ENCODE measurements at regions of chr1 and their contacts with region 1.

Region 1: GRCh38 chr1:52683367-52683940 is 14.7 kb downstream of the COA7 start:
- DNase-seq: no peak
- H3K4me3 ChIP-seq: no peak overlapping the region
- H3K4me3 Mint-ChIP-seq: no peak overlapping the region
- H3K27ac ChIP-seq: no peak overlapping the region
- H3K27ac Mint-ChIP-seq: peak overlapping the region in 3 of 7 donors; percentile 1 to 75 (median 30)
- H3K4me1 ChIP-seq: peaks cover 8% of the 10 kb centered on the region
- H3K4me1 Mint-ChIP-seq: peaks cover 5 to 23% (median 8%) of the 10 kb centered on the region in 4 donors
- H3K27me3 ChIP-seq: no peaks in the 10 kb centered on the region
- H3K27me3 Mint-ChIP-seq: no peaks in the 10 kb centered on the region

Region 2: DNA sequence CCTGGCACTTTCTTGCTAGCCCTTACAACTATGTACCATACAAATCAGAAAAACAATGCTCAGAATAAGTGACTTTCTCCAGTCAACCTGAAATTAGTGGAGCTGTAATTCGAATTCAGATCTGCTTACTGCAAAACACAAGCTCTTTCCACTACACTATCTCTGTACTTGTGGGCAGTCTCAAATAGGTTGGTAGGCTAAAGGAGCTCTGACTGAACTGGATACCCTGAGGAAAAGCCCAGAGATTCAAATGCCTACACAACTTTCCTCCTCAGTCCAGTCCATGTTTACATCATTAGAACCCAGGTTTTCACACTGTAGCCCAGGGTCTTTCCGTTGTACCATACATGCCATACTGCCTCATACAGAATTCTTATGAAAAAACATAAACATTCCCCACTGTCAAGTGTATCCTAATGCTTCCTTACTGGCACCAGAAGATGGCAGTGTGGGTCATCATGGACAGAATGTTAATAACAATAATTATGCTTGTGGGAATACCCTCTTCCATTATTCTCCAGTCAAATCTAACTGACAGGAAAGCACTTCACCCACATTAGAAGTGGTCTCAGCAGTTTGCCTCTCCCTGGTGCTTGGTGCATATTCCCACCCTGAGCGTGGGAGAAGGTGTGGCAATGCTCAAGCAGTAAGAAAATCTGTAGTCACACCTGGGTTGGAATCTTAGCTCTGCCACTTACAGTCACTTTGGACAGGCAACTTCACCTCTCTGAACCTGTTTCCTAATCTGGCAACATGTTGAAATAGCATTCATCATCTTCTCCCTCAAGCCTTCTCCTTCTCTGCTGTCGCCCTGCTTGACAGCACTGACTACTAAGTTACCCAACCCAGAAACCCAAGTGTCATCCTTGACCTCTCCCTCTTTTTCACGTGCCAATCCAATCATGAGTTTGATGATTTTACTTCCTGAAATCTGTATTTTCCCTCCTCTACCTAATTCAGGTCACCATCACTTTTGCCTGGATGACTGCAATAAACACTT is 556.0 kb before region 1 on chr1:
- CTCF ChIA-PET with region 1: interaction called, 4 read pairs
- POLR2A ChIA-PET with region 1: no interaction called
- intact Hi-C with region 1: loop called (anchors 1 kb)
- DNase-seq: peak in 4 of 5 donors; percentile 18 to 31 (median 26)
- H3K4me3 ChIP-seq: no peak overlapping the region
- H3K4me3 Mint-ChIP-seq: no peak overlapping the region
- H3K27ac ChIP-seq: no peak overlapping the region
- H3K27ac Mint-ChIP-seq: no peak overlapping the region
- H3K4me1 ChIP-seq: no peaks in the 10 kb centered on the region
- H3K4me1 Mint-ChIP-seq: no peaks in the 10 kb centered on the region
- H3K27me3 ChIP-seq: no peaks in the 10 kb centered on the region
- H3K27me3 Mint-ChIP-seq: peaks cover 10 to 17% of the 10 kb centered on the region in 2 donors

Region 3: GRCh38 chr1:52365746-52366516 is 317.5 kb before region 1 on chr1 and contains the start of gene CC2D1B:
- CTCF ChIA-PET with region 1: interaction called, 4 read pairs
- POLR2A ChIA-PET with region 1: interaction called, 3 read pairs
- intact Hi-C with region 1: loop called (anchors 1 kb)
- DNase-seq: peak; percentile 98 to 100 (median 100)
- H3K4me3 ChIP-seq: peak within 1 kb of the TSS; percentile 53 to 88
- H3K4me3 Mint-ChIP-seq: peak within 1 kb of the TSS; percentile 90 to 97 (median 92)
- H3K27ac ChIP-seq: peak within 1 kb of the TSS; percentile 78
- H3K27ac Mint-ChIP-seq: peak within 1 kb of the TSS; percentile 90 to 97 (median 95)
- H3K4me1 ChIP-seq: peaks cover 32% of the 10 kb centered on the region
- H3K4me1 Mint-ChIP-seq: peaks cover 20 to 56% (median 41%) of the 10 kb centered on the region in 4 donors
- H3K27me3 ChIP-seq: no peaks in the 10 kb centered on the region
- H3K27me3 Mint-ChIP-seq: no peaks in the 10 kb centered on the region
- total RNA-seq, gene CC2D1B: 83.7 to 84.1 TPM

Region 4: DNA sequence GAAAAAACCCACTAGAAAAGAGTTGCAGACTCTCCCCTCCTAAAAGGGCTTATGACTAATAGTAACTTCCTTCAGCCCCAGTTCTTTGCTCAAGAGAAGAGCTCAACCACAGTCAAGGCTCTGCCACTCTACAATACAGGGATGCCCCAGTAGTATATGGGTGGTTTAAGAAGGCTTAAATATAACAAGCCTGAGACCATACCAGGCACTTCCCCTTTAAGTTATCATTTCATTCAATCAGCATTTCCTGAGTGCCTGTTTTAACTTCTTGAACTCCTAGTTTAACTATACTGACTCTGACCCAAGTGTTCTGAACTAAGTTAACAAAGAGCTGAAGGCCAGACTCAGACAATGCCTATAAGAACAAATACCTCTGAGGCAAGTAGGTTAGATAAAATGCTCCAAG is 259.2 kb before region 1 on chr1:
- CTCF ChIA-PET with region 1: interaction called, 6 read pairs
- POLR2A ChIA-PET with region 1: interaction called, 4 read pairs
- intact Hi-C with region 1: loop called (anchors 5 kb)
- DNase-seq: peak; percentile 65 to 86 (median 71)
- H3K4me3 ChIP-seq: peak overlapping the region in 1 of 2 donors; percentile 4
- H3K4me3 Mint-ChIP-seq: peak overlapping the region; percentile 66 to 83 (median 74)
- H3K27ac ChIP-seq: peak overlapping the region; percentile 53
- H3K27ac Mint-ChIP-seq: peak overlapping the region; percentile 91 to 99 (median 94)
- H3K4me1 ChIP-seq: peaks cover 57% of the 10 kb centered on the region
- H3K4me1 Mint-ChIP-seq: peaks cover 38 to 49% (median 46%) of the 10 kb centered on the region in 4 donors
- H3K27me3 ChIP-seq: no peaks in the 10 kb centered on the region
- H3K27me3 Mint-ChIP-seq: no peaks in the 10 kb centered on the region

Region 5: DNA sequence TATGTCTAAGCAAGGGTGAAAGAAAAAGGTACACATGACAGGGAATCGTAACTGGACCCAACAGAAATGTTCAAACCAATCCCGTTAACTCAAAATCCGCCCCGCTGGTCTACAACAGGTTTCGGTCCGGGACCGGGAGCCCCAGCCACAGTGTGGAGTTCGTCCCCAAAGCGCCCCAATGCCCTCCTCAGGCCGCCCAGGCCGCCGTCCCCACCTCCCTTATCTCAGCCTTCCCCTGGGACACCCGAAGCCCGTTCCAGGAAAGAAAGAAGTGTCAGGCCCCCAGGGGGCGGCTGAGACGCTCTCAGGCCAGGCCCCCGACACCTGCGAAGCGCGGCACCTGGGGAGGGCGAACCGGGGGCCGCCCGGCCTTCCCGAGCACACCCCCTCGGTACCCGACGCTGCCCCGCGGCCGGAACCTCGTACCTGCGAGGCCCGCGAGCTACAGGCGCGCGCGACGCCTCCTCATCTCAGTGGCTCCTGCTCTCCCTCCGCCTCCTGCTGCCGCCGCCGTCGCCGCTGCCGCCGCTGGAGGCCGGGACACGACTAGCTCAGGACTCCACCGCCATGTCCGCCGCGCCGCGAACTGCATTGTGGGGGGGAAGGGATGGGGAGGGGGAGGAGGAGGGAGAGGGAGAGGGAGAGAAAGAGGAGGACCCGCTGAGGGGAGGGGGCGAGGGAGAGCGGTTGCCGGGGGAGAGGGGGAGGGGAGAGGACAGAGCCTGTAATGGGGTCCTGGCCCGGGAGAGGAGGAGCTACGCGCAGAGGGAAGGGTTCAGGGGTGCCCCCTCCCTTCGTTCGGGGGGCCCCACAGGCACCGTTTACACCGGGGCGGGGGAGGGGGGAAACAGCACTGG is 130.7 kb before region 1 on chr1 and contains the start of gene TUT4:
- CTCF ChIA-PET with region 1: interaction called, 6 read pairs
- POLR2A ChIA-PET with region 1: interaction called, 4 read pairs
- intact Hi-C with region 1: loop called (anchors 1 kb)
- DNase-seq: peak; percentile 67 to 83 (median 73)
- H3K4me3 ChIP-seq: peak within 1 kb of the TSS; percentile 68 to 95
- H3K4me3 Mint-ChIP-seq: peak within 1 kb of the TSS in 7 of 8 donors; percentile 48 to 87 (median 77)
- H3K27ac ChIP-seq: peak within 1 kb of the TSS; percentile 92
- H3K27ac Mint-ChIP-seq: peak within 1 kb of the TSS; percentile 57 to 91 (median 83)
- H3K4me1 ChIP-seq: peaks cover 41% of the 10 kb centered on the region
- H3K4me1 Mint-ChIP-seq: peaks cover 25 to 41% (median 33%) of the 10 kb centered on the region in 4 donors
- H3K27me3 ChIP-seq: no peaks in the 10 kb centered on the region
- H3K27me3 Mint-ChIP-seq: no peaks in the 10 kb centered on the region
- total RNA-seq, gene TUT4: 151 to 159 TPM

Region 6: DNA sequence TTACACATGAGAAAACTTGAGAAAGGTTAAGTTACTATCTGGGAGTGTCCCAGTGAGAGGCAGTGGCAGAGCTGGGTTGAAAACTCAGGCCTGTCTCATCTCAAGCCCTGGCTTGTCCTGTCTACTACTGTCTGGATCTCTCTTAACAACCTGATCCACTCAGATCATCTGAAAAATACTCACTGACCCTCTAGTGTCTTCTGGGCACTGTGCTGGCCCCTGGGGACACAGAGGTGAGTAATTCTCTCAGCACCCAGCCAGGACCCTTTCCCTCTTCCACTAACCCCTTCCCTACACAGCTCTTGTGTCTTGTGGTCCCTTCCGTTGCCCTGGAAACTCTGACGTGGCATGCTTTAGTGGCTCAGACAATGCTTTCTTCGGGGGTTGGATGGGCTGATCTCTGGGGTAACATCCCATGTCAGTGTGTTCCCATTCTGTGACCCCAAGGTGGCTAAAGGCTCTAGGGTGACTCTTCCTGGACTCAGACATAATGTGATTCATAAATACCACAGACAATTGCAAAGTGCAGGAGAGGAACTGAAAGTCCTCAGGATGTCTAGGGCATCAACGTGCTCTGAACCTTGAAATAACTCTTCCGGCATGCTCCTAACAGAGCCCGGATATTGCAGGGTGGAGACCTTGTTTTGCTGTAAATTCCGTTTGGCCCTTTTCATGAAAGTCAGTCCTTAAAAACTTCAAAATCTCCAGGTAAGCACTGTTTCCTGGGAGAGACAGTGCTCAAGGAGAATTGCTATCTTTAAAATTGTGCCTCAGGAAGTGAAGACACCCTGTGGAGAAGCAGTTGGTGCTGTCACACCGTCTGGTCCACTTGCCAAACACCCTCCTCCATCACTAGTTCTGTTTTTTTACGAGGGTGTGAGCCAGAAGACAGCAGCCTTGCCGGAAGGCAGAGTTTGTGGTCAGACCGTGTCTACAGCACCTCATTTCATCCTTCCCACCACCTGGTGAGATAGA is 46.4 kb before region 1 on chr1:
- CTCF ChIA-PET with region 1: interaction called, 4 read pairs
- POLR2A ChIA-PET with region 1: interaction called, 5 read pairs
- intact Hi-C with region 1: loop called (anchors 1 kb)
- DNase-seq: peak; percentile 83 to 92 (median 85)
- H3K4me3 ChIP-seq: peak overlapping the region; percentile 0 to 20
- H3K4me3 Mint-ChIP-seq: peak overlapping the region; percentile 77 to 91 (median 87)
- H3K27ac ChIP-seq: peak overlapping the region; percentile 85
- H3K27ac Mint-ChIP-seq: peak overlapping the region; percentile 96 to 100 (median 100)
- H3K4me1 ChIP-seq: peaks cover 92% of the 10 kb centered on the region
- H3K4me1 Mint-ChIP-seq: peaks cover 61 to 86% (median 75%) of the 10 kb centered on the region in 4 donors
- H3K27me3 ChIP-seq: no peaks in the 10 kb centered on the region
- H3K27me3 Mint-ChIP-seq: no peaks in the 10 kb centered on the region

Region 7: GRCh38 chr1:52751589-52752483 is 68.4 kb after region 1 on chr1:
- CTCF ChIA-PET with region 1: no interaction called
- POLR2A ChIA-PET with region 1: no interaction called
- intact Hi-C with region 1: no loop called
- DNase-seq: no peak
- H3K4me3 ChIP-seq: no peak overlapping the region
- H3K4me3 Mint-ChIP-seq: no peak overlapping the region
- H3K27ac ChIP-seq: no peak overlapping the region
- H3K27ac Mint-ChIP-seq: peak overlapping the region in 1 of 7 donors; percentile 67
- H3K4me1 ChIP-seq: no peaks in the 10 kb centered on the region
- H3K4me1 Mint-ChIP-seq: peaks cover 16 to 27% (median 20%) of the 10 kb centered on the region in 4 donors
- H3K27me3 ChIP-seq: no peaks in the 10 kb centered on the region
- H3K27me3 Mint-ChIP-seq: no peaks in the 10 kb centered on the region